ENCODE measurements at regions of chr17 and their contacts with region 1.

Region 1: DNA sequence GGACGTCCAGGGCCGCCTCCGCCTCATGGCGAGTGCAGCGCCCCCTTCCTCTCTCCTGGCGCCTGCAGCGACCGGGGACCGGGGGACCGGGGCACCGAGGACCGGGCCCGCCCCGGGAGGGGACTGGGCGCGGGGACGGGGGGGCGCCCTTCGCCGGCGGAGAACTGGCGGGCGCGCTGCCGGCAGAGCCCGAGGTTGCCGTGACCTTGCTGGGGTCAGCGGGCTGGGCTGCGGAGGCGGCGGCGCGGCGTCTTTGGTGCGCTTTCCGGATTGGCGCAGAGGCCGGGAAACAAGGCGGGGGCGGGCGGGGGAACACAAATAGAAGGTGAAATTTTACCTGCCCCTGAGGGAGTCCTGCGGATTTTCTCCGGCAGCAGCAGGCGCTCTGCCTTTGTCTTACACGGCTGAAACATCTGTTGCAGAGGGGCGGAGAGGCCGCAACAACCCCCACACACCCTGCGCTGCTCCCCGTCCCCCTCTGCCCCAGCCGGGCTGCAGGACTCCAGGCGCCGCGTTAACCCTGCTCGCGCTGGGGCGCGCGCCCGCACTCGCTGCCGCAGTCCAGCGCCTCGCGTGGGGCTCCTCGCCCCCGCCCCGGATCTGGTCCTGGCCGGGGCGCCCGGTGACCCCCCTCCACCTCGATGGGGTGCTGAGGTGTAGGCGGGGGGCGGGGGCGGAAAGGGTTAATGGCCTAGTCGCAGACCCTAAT is 53.5 kb downstream of the SREBF1 start:
- DNase-seq: peak; percentile 65 to 78
- H3K4me3 ChIP-seq: peak overlapping the region; percentile 57
- H3K4me3 Mint-ChIP-seq: peak overlapping the region; percentile 86
- H3K27ac Mint-ChIP-seq: no peak overlapping the region
- H3K4me1 ChIP-seq: peaks cover 31% of the 10 kb centered on the region
- H3K4me1 Mint-ChIP-seq: peaks cover 26% of the 10 kb centered on the region
- H3K27me3 ChIP-seq: no peaks in the 10 kb centered on the region
- H3K27me3 Mint-ChIP-seq: no peaks in the 10 kb centered on the region
- CTCF ChIP-seq: peak in 1 of 2 experiments; percentile 22

Region 2: DNA sequence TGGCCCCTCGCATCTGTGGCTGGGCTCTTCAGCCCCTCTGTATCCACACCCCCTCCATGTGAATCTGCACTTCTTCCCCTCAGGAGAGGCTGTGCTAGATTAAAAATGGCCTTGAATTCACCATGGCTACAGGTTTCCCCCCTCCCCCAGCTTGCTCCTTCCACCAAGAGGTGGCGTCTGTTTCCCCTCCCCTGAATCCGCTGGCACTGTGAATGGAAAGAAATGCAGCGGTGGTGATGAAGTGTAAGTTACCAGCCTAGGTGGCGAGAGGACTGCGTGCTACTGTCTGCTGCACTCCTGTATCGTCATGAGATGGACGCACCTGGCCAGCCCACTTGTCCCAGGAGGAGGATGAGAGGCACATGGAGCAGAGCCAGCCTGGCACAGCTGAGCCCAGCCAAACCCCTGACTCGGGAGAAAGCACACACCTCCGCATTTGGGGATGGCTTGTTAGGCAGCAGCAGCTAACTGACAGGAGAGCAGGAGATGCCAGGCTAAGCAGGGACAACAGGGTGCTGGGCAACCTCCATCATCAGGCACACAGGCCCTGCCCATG is 837.5 kb before region 1 on chr17:
- CTCF ChIA-PET with region 1: no interaction called
- POLR2A ChIA-PET with region 1: no interaction called
- intact Hi-C with region 1: no loop called
- DNase-seq: no peak
- H3K4me3 ChIP-seq: no peak overlapping the region
- H3K4me3 Mint-ChIP-seq: no peak overlapping the region
- H3K27ac Mint-ChIP-seq: no peak overlapping the region
- H3K4me1 ChIP-seq: no peaks in the 10 kb centered on the region
- H3K4me1 Mint-ChIP-seq: no peaks in the 10 kb centered on the region
- H3K27me3 ChIP-seq: no peaks in the 10 kb centered on the region
- H3K27me3 Mint-ChIP-seq: no peaks in the 10 kb centered on the region
- CTCF ChIP-seq: peak in 1 of 2 experiments; percentile 21

Region 3: DNA sequence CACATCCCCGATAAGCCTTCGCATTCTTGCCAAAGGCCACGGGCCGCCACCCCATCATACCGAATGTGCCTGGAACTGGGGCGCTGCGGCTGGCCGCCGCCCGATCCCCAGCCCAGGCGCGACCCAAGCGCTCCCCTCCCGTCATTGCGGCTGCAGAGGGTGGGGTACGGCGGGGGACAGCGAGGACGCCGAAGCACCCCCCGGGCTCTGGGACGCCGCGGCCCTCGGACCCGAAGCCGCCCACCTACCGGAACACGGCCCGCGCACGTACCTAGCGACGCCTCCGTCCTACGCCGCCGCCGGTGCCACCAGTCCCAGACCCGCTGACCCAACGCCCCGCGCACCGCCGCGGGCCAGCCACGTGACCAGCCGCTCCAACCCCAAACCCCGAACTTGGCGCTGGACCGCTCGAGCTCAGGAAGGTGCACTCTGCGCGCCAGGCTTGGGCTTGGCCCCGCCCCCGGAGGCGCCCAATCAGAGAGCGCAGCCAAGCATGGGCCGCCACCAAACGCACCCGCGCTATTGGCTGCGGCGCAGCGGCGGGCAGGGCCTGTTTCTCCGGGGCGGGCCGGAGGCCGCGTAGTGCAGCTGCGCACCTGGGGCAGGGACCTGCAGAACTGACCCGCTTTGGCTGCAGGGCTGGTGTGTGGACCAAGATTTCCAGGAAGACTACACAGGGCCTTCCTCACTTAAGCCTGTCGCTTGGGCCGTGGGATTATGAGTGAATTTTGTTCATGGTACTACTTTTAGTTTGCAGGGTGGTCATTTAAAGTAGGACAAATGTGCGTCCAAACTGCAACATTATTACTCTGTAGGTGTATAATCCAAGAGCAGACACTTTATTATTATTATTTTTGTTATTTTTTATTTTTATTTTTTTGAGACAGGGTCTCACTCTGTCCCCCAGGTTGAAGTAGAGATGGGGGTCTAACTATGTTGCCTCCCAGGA is 580.1 kb after region 1 on chr17 and contains the start of gene SHMT1:
- CTCF ChIA-PET with region 1: no interaction called
- POLR2A ChIA-PET with region 1: no interaction called
- intact Hi-C with region 1: loop called (anchors 5 kb)
- DNase-seq: peak; percentile 96 to 98
- H3K4me3 ChIP-seq: peak within 1 kb of the TSS; percentile 99
- H3K4me3 Mint-ChIP-seq: peak within 1 kb of the TSS; percentile 81
- H3K27ac Mint-ChIP-seq: peak within 1 kb of the TSS; percentile 45
- H3K4me1 ChIP-seq: 0 out of 2 replicates have a peak, but pooled peaks cover 4% of the 10 kb centered on the region
- H3K4me1 Mint-ChIP-seq: peaks cover 7% of the 10 kb centered on the region
- H3K27me3 ChIP-seq: no peaks in the 10 kb centered on the region; the same call in 1 of the 2 replicates
- H3K27me3 Mint-ChIP-seq: no peaks in the 10 kb centered on the region
- CTCF ChIP-seq: no peak
- total RNA-seq, gene SHMT1: 69.4 and 72.4 TPM in 2 replicates